ENCODE measurements at regions of chr22 and their contacts with region 1.

Region 1: DNA sequence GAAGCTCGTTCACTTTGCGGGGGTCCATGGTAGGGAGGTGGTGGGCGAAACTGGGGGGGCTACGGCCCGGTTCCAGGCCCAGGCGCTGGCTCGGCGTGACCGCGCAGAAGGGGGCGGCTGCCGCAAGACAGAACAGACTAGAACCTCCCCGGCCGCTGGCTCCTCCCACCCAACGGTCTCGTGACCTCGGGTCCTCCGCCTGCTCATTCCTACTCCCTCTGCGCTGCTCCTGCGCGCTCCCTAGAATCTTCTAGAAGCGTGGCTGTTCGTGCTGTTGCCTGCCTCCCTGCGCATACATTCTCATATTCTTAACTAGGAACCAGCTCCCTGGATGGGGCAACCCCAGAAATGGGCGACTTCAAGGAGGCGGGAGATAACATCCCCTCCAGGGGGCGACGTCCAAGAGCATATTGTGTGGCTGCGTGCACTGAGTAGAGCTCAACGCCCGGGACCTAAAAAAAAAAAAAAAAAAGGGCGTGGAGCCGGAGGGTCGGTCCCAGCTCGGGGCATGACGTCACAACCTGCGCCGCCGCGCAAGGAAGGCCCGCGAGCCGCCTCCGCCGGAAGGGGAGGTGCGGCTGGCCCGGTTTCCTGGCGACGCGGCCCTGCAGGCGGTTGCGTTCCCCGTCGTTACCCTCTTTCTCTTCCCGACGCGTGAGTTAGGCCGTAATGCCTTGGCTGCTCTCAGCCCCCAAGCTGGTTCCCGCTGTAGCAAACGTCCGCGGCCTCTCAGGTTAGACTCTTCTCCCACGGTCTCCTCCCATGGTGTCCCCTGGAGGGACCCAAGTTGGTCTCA is at the starts of genes ST13 and XPNPEP3:
- DNase-seq: peak; percentile 96
- H3K4me3 ChIP-seq: peak within 1 kb of the TSS; percentile 95
- H3K27ac ChIP-seq: peak within 1 kb of the TSS; percentile 85
- H3K4me1 ChIP-seq: peaks cover 39% of the 10 kb centered on the region
- CTCF ChIP-seq: peak; percentile 57; the same call in 1 of the 2 replicates
- total RNA-seq, gene ST13: 121 and 255 TPM in 2 replicates
- total RNA-seq, gene XPNPEP3: 4.9 and 12.2 TPM in 2 replicates

Region 2: DNA sequence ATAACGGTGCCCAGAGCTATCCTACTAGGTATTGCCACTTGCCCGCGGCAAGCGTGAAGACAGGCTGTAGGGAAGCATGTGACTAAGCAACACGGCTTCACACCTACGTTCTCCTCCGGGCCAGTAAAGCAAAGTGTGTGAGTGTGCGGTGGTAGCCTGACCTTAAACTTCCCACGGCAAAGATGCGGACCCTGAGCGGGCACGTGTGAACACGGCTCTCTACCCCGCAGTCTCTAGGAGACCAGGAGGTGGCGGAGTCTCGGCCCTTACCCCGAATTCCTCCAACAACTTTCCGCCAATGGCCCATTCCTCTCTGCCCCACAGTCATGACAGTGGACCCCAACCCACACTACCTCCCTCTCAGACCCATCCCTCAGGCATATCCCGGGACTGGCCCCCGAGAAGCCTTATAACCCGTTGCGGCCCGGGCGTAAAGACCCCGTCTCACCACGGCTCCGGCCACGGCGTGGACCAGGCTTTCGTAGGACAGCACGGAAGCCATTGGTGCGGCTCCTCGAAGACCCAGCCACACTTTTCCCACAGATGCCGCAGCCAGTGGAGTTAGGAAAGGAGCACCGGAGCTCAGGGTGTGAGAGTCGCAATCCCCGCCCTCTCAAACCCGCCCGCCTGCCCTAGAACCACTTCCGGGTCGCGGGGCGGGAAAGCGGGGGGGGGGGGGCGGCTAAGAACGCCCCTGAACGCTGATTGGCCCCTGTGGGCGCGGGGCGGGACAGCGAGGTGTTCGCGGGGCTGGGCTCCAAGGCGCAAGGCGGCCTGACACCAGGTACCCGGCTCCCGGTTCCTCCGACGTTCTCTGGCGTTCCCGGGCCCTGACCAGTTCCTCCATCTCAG is 37.7 kb before region 1 on chr22 and contains the start of gene SLC25A17:
- CTCF ChIA-PET with region 1: no interaction called
- POLR2A ChIA-PET with region 1: interaction called, 3 read pairs
- intact Hi-C with region 1: loop called (anchors 2 kb)
- DNase-seq: peak; percentile 92
- H3K4me3 ChIP-seq: peak within 1 kb of the TSS; percentile 96
- H3K27ac ChIP-seq: peak within 1 kb of the TSS; percentile 65
- H3K4me1 ChIP-seq: peaks cover 38% of the 10 kb centered on the region
- CTCF ChIP-seq: peak; percentile 65
- total RNA-seq, gene SLC25A17: 19.1 and 25.9 TPM in 2 replicates

Region 3: GRCh38 chr22:40867109-40867508 is 10.4 kb after region 1 on chr22:
- CTCF ChIA-PET with region 1: interaction called, 3 read pairs
- POLR2A ChIA-PET with region 1: interaction called, 12 read pairs
- intact Hi-C with region 1: no loop called
- DNase-seq: no peak
- H3K4me3 ChIP-seq: no peak overlapping the region
- H3K27ac ChIP-seq: no peak overlapping the region
- H3K4me1 ChIP-seq: peaks cover 8% of the 10 kb centered on the region
- CTCF ChIP-seq: no peak

Region 4: DNA sequence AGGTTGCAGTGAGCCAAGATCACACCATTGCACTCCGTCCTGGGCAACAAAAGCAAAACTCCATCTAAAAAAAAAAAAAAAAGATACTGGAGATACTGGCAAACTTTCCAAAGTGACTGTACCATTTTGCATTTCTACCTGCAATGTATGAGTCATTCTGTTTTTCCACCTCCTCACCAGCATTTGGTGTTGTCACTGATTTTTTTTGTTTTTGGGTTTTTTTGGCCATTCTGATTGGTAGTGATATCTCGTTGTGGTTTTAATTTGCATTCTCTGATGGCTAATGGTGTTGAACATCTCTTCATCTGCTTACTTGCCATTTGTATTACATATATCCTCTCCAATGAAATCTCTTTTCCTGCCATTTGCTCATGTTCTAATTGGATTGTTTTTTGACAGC is 82.5 kb after region 1 on chr22:
- CTCF ChIA-PET with region 1: no interaction called
- POLR2A ChIA-PET with region 1: no interaction called
- intact Hi-C with region 1: no loop called
- DNase-seq: no peak
- H3K4me3 ChIP-seq: no peak overlapping the region
- H3K27ac ChIP-seq: no peak overlapping the region
- H3K4me1 ChIP-seq: peaks cover 30% of the 10 kb centered on the region
- CTCF ChIP-seq: no peak

Region 5: GRCh38 chr22:41197038-41197972 is 340.6 kb after region 1 on chr22:
- CTCF ChIA-PET with region 1: no interaction called
- POLR2A ChIA-PET with region 1: no interaction called
- intact Hi-C with region 1: loop called (anchors 2 kb)
- DNase-seq: peak; percentile 88
- H3K4me3 ChIP-seq: peak overlapping the region; percentile 78
- H3K27ac ChIP-seq: no peak overlapping the region
- H3K4me1 ChIP-seq: peaks cover 13% of the 10 kb centered on the region
- CTCF ChIP-seq: 0 out of 2 replicates have a peak, but pooled peaks have one; percentile 43

Measured in OCI-LY7 (cell line).